Prostate gland (tissue), 2 donors: ENCODE measurements at regions of chr15 and their contacts with region 1.

Region 1: DNA sequence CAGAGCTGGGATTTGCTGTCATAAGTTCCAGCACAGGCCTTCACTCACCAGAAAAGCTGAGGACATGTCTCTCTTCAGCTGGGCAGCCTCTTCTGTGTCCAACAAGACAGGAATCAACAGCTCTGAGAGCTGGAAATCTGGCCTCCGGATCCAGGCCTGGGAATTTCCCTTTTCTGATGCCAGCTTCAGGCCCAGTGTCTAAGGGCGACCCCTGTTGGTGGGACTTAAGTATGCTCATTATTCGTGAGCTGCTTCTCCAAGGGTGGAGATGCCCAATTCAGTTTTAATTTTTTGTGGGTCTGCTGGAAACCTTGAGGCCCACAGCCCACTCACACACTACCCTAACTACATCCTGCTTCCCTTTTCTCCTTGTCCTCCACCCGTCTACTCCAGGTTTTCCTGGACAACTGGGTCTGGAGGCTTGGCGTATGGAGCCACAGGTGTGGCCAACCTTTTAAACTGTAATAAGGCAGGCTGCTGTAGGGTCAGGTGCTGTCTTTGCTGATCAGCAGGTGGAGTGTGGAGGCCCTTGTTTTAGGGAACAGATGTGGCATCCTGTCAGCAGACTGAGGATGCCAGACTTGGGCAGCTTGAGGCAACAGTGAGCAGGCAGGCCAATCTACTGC is 2.6 kb upstream of the CEMIP start:
- DNase-seq: peak; percentile 74
- H3K4me3 ChIP-seq: no peak overlapping the region
- H3K27ac ChIP-seq: peak overlapping the region; percentile 71 to 80
- H3K4me1 ChIP-seq: peaks cover 6% of the 10 kb centered on the region
- H3K27me3 ChIP-seq: no peaks in the 10 kb centered on the region
- CTCF ChIP-seq: peak; percentile 75 to 91 (median 80)
- POLR2A ChIP-seq: no peak

Region 2: DNA sequence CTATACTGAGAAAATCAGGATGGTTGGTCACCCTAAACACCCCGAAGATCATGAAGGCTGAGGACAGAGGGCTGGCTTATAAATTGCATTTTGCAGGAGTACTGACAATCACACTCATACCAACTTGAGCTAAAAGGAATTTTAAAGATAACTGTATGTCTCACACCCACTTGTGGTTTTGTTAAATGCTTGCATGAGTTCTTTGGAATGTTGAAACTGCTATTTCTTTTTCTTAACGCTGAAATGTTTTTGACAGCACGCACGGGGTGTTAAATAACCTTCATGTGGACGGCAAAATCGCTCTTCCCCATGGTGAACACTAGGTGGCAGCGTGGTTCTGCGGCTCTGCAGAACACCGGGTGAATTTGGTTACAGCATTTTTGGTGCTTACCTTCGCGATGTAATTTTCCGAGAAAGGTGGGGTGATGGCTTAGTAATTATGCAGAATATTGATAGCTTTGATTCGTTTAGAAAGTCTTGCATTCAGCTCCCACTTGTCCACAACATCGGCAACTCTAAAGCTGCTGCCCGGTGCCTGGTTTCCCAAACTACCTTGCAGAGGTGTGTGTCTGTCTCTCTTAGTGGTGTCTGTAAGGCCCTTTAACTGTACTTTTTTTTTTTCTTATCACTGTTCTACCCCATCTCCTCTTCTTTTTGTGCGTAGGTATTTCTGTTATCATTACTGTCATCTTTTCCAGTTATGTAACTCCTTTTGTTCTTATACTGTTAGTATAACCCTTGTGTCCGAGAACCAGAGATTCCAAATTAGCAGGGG is 320.7 kb before region 1 on chr15:
- intact Hi-C with region 1: loop called (anchors 2 kb)
- DNase-seq: peak; percentile 54
- H3K4me3 ChIP-seq: no peak overlapping the region
- H3K27ac ChIP-seq: no peak overlapping the region
- H3K4me1 ChIP-seq: no peaks in the 10 kb centered on the region
- H3K27me3 ChIP-seq: no peaks in the 10 kb centered on the region
- CTCF ChIP-seq: peak; percentile 82 to 85 (median 84)
- POLR2A ChIP-seq: no peak

Region 3: DNA sequence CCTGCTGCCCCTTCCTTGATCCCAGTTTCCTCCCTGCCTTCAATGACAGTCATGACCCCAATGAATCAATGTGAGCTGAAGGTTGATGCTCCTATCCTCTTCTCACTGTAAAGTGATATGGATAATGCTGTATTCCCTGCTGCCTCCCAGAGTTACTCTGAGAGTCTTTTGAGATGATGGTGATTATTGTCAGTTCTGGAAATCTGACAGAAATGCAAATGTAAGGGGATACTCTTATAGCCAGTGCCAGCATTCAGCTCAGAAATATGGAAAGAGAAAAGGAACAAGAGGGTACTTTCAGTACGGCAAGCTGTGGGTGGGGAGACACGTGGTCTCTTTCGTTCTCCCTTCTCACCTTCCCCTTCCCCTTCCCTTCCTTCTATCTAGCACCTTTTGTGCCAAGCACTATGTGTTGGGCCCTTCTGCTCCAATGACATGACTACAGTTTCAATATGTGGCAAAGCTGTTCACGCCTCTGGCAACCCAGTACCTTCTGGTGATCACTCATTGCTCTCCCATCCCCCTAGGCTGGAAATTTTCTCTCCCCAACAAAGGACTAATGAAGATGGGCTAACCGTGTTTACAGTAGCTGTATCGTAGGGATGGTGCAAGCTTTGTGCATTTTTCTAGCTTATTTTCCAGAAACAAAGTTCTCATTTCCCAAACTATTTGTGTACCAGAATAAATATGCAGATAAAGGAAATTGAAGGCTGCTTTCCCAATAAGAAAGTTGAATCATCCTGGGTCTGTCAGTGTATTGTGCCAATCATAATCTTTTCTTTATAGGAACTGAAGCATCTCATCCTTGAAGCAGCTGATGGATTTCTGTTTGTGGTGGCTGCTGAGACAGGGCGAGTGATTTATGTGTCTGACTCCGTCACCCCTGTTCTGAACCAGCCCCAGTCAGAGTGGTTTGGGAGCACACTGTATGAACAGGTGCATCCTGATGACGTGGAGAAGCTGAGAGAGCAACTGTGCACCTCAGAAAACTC is 302.0 kb before region 1 on chr15:
- intact Hi-C with region 1: loop called (anchors 5 kb)
- DNase-seq: no peak
- H3K4me3 ChIP-seq: no peak overlapping the region
- H3K27ac ChIP-seq: no peak overlapping the region
- H3K4me1 ChIP-seq: no peaks in the 10 kb centered on the region
- H3K27me3 ChIP-seq: no peaks in the 10 kb centered on the region
- CTCF ChIP-seq: no peak
- POLR2A ChIP-seq: no peak

Region 4: DNA sequence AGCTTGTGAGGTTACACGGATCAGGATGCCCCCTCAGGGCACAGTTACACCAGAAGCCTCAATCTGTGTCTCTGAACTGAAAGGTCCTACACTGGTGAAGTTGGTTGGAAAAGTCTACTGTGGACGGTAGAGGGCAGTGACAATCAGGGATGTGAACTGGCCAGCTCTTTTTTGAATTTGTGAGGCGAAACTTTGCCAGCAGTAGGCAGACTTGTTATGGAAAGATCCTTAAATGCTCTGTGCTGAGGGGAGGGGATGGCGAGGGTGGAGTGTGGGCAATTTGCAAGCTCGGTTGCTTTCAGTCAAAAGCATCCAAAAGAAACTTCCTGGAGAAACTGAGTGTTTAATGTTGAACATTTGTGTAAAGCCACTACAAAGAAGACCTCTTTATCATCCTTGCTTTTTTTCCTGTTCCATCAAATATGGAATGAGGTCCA is 208.8 kb before region 1 on chr15:
- intact Hi-C with region 1: loop called (anchors 2 kb)
- DNase-seq: peak; percentile 59
- H3K4me3 ChIP-seq: no peak overlapping the region
- H3K27ac ChIP-seq: no peak overlapping the region
- H3K4me1 ChIP-seq: no peaks in the 10 kb centered on the region
- H3K27me3 ChIP-seq: no peaks in the 10 kb centered on the region
- CTCF ChIP-seq: peak in 3 of 4 experiments; percentile 63 to 79 (median 76)
- POLR2A ChIP-seq: no peak

Region 5: DNA sequence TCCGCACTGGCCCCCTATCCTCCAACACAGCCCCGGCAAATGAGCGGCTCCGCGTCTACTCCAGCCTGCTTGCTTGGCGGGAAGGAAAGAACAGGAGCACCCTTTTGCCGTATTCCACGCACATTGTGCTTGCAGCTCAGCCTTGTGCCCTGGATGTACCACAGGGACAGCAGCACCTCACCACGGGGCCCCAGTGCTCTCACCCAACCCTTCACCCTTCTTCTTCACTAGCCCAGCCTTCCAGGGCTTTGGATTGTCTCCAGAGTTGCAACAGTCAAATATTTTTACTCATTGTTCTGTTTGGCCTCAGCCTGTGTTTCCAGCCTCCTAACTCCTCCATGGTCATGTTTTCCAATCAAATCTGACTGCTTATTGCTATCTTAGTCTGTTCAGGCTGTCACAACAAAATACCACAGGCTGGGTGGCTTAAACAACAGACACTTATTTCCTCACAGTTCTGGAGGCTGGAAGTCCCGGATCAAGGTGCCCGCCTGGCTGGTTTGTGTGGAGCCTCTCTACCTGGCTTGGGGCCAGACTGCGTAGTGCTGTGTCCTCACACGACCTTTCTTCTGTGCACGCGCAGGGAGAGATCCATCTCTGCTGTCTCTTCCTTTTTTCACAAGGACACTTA is 160.7 kb before region 1 on chr15:
- intact Hi-C with region 1: loop called (anchors 5 kb)
- DNase-seq: peak; percentile 83
- H3K4me3 ChIP-seq: no peak overlapping the region
- H3K27ac ChIP-seq: peak overlapping the region in 1 of 2 donors; percentile 32
- H3K4me1 ChIP-seq: peaks cover 5% of the 10 kb centered on the region
- H3K27me3 ChIP-seq: no peaks in the 10 kb centered on the region
- CTCF ChIP-seq: no peak
- POLR2A ChIP-seq: no peak

Region 6: DNA sequence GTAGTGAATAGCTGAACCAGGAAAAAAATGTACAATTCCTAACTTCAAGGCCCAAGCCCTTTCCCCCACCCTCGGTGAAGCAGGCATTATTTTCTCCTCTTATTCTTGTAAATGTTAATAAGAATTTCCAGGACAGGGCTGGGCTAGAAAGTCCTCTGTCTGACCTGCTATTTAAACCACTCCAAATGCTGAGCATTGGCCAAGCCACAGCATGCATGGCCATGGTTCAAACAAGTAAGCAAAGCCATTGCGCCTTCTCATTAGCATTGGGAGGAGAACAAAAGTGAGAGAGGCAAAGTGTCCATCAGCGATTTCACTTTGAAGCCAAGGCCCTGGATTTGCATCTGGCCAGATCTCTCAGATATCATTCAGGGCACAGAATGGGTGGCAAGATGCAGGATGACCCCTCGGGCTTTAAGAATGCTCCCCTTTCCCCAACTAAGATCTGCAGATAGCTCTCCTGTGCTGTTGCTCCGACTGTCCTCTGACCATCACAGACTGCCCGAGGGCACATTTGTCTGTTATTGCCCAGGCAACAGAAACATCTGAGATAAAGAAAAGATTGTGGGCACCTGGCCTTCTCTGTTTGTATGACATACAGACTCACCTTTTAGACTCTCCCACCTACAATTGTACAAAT is 49.0 kb after region 1 on chr15:
- intact Hi-C with region 1: no loop called
- DNase-seq: peak; percentile 61
- H3K4me3 ChIP-seq: no peak overlapping the region
- H3K27ac ChIP-seq: no peak overlapping the region
- H3K4me1 ChIP-seq: no peaks in the 10 kb centered on the region
- H3K27me3 ChIP-seq: no peaks in the 10 kb centered on the region
- CTCF ChIP-seq: no peak
- POLR2A ChIP-seq: no peak

Region 7: GRCh38 chr15:80893777-80894176 is 117.2 kb after region 1 on chr15:
- intact Hi-C with region 1: no loop called
- DNase-seq: no peak
- H3K4me3 ChIP-seq: no peak overlapping the region
- H3K27ac ChIP-seq: no peak overlapping the region
- H3K4me1 ChIP-seq: no peaks in the 10 kb centered on the region
- H3K27me3 ChIP-seq: no peaks in the 10 kb centered on the region
- CTCF ChIP-seq: no peak
- POLR2A ChIP-seq: no peak

Region 8: DNA sequence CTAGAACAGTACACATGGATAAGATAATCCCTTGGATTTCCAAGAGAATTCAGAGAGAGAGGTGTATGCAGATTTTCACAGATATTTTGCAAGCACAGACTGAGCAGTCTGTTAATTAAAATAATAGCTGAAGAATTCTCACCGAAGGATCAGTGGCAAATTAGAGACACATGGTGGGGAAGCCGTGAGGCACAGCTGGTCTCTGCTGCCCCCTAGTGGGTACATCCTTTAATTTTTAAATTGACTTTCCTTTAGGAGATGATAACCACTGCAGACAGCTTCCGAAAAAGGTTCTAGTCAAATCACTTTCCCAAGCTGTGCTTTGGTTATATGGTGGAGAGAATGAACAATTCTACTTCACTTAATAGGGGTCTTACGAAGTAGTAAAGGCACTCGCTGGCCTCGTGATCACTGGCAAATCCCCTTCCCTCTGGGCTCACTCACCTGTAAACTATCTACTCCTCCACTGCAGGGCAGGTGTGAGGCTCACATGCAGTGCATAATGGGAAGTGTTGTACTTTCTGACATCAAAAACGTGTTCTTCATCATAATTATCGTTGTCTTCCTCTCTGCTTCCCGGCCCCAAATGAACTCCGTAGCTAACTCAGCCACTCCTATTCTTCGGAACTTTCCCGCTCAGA is 193.6 kb after region 1 on chr15:
- intact Hi-C with region 1: loop called (anchors 5 kb)
- DNase-seq: peak; percentile 61
- H3K4me3 ChIP-seq: no peak overlapping the region
- H3K27ac ChIP-seq: no peak overlapping the region
- H3K4me1 ChIP-seq: no peaks in the 10 kb centered on the region
- H3K27me3 ChIP-seq: no peaks in the 10 kb centered on the region
- CTCF ChIP-seq: peak; percentile 84 to 95 (median 88)
- POLR2A ChIP-seq: no peak